Activated T-helper 2 cell treated with anti-CD3 and anti-CD28 coated beads, Interferon-gamma antibody, Interleukin-2, Interleukin-4, amounts not matched to agents 10 μg/mL and 5 μg/mL and 100 μg/mL, durations not matched to agents 14 hours and 24 hours and 36 hours (primary cell): ENCODE measurements at regions of chr4 and their contacts with region 1.

Region 1: GRCh38 chr4:6926681-6927478 is 17.3 kb downstream of the TBC1D14 start:
- DNase-seq: peak; percentile 48
- H3K4me3 Mint-ChIP-seq: peak overlapping the region; percentile 62
- H3K27ac Mint-ChIP-seq: peak overlapping the region; percentile 36
- H3K4me1 Mint-ChIP-seq: peaks cover 39% of the 10 kb centered on the region
- H3K27me3 Mint-ChIP-seq: no peaks in the 10 kb centered on the region

Region 2: DNA sequence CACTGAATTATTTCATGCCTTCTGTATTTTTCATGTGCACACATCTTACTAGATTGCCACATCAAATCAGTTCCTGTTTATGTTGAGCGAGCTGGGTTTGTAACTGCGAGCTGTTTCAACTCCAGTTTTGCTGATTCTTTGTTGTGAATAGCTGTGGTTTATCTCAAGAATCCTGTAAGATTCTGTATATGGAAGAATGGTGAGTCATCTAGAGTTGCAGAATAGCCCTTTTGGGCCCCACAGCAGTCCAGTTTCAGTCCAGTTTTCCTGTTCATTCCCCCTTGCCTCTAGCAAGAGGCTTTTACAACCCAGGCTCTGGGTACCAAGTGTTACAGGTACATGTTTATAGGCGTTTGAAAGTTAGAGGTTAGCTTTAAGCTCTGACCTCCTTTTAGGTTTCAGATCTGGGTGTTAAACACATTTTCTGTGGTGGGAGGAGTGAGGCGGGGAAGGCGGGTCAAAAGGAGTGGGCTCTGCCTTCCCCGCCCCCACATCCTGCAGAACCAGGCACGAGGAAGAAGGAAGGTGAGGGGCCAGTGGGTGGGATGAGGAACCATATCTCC is 15.4 kb after region 1 on chr4:
- intact Hi-C with region 1: loop called (anchors 1 kb)
- DNase-seq: no peak
- H3K4me3 Mint-ChIP-seq: peak overlapping the region; percentile 45
- H3K27ac Mint-ChIP-seq: peak overlapping the region; percentile 64
- H3K4me1 Mint-ChIP-seq: peaks cover 33% of the 10 kb centered on the region
- H3K27me3 Mint-ChIP-seq: no peaks in the 10 kb centered on the region

Region 3: DNA sequence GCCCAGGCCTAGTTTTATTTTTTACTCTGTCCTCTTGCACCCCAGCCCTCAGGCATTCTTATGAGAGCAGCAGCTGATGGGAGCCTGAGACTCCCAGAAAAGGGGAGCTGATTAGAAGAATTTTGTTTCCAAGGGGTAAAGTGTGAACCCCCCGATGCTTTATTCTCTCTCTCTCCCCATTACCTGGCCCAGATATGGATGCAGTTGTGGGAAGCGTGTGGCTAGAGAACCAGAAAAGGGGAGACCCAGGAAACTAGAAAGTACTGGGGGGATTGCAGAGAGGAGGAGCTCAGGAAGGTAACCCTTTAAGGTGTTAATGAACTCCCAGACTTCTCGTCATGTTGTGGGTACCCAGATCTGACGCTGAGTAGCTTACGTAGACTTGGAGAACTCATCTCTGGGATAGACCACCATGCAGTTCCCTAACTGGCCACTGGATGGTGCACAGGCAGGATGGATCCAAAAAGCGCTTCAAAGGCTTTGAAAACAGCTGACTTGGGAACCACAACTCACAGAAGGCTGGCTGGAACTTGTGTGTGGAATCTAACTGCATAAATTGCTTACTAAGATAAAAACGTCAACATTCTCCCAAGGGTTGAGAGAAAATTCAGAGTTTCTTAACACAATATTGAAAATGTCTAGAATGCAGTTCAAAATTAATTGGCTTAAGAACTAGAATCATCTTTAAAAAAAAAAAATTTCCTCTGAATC is 47.4 kb after region 1 on chr4:
- intact Hi-C with region 1: loop called (anchors 5 kb)
- DNase-seq: peak; percentile 67
- H3K4me3 Mint-ChIP-seq: no peak overlapping the region
- H3K27ac Mint-ChIP-seq: no peak overlapping the region
- H3K4me1 Mint-ChIP-seq: peaks cover 7% of the 10 kb centered on the region
- H3K27me3 Mint-ChIP-seq: no peaks in the 10 kb centered on the region